Astrocyte of the spinal cord (primary cell): ENCODE measurements at regions of chr12 and their contacts with region 1.

Region 1: DNA sequence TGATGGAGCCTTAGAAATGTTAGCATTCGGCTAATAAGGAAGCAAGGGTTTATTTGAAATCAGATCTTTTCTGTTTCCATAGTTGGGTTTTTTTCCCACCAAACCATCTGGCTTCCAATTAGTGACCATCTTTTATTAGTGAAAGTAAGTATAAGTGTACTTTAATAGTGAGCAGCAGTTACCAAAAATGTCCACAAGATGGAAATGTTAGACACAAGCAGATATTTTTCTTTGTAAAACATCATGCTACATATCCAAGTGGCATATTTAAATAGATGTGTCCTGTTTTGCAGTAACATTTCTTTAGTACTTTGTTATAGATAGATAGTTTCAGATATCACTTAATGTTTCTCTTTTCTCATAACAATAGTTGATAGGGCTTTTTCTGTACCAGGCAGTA is 28.8 kb downstream of the YEATS4 start:
- DNase-seq: peak; percentile 76
- H3K4me3 ChIP-seq: no peak overlapping the region
- CTCF ChIP-seq: peak; percentile 67

Region 2: DNA sequence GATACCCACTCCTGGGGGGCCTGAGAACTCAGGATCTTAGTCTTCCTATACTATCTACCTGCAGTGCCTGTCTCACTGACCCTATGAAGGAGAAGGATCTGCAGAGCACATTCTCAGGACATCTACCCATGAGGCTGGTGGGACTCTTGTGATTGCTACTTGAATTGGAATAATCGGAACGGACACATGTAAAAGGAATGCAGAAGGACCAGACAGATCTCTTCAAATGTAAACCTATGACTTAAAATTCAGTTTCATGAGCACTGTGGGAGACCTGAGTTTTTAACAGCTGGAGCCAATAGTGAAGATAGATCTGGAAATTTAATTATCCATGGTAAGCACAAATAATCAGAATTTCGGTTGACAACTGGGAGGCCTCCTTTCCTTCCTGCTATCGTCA is 184.2 kb before region 1 on chr12:
- in situ Hi-C with region 1: no loop called
- DNase-seq: no peak
- H3K4me3 ChIP-seq: no peak overlapping the region
- CTCF ChIP-seq: no peak

Region 3: DNA sequence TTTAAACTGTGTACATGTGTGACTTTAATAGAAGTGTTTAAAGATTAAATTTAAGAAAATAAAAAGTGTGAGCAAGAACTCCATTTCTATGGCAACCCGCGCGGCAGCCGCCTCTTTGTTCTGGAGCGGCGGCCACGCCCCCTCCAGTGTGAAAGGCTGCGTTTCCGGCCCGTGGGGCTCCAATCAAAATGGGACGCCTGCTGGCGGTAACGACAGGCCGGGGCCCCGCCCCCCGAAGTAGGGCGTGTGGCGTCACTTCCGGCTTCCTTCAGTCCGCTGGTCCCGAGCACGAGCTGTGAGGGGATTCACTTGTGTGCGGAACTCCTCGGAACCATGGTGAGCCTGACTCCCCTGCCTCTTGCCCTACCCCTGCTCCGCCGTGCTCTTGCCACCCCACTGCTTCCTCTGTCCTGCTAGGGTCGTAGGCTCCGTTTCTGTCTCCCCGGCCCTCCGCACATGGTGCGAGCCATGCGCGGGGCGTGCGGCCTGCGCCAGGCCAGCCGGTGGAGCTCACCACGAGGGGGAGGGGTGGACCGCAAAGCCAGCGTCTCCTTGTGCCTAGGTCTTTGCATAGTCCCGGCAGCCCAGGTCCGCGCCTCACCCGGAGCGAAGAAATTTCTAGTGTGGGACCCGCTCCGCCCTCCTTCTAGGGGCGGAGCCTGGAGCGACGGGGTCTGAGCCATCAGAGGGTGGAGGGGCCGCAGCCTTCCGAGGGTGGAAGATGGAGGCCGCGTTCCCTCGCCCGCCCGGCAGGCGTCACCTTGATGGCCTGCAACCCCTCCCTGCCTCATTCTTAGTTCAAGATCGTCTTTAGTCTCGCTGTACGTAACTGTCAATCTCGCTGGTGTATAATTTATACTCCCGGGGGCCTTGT is 197.1 kb after region 1 on chr12 and contains the start of gene CCT2:
- in situ Hi-C with region 1: loop called (anchors 25 kb)
- DNase-seq: peak; percentile 96
- H3K4me3 ChIP-seq: peak within 1 kb of the TSS; percentile 100
- CTCF ChIP-seq: peak; percentile 50